ENCODE measurements at regions of chr10 and their contacts with region 1.

Region 1: DNA sequence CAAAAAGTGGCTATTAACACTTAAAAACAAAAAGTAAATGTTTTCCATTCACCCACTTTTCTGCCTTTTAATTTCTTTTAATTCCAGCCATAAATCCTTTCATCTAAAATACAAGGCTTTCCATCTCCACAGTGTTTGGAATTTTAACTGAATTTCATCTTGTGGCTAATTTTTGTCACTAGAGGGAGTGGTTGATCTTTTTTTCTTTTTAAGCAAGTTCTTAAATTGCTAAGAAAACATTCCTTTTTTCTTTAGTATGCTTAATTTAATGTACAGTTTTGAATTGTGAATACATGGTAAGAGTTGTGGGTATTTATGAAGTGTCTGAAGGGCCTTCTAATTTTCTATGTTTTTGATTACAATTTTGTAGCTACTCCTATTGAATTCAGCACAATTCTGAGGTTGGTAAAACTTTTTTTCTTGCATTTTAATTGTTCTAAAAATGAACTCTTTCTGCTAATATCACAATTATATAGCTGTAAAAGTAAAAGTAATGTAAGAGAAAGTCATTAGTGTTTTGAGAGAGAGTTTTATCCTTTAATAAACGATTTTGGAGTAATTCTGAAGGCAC is 54.9 kb upstream of the ANK3 start:
- DNase-seq: no peak
- H3K4me3 ChIP-seq: no peak overlapping the region
- H3K27ac ChIP-seq: no peak overlapping the region
- H3K4me1 ChIP-seq: peaks cover 0 to 16% of the 10 kb centered on the region in 2 donors
- H3K27me3 ChIP-seq: no peaks in the 10 kb centered on the region
- CTCF ChIP-seq: peak; percentile 23 to 74 (median 56)
- POLR2A ChIP-seq: no peak

Region 2: DNA sequence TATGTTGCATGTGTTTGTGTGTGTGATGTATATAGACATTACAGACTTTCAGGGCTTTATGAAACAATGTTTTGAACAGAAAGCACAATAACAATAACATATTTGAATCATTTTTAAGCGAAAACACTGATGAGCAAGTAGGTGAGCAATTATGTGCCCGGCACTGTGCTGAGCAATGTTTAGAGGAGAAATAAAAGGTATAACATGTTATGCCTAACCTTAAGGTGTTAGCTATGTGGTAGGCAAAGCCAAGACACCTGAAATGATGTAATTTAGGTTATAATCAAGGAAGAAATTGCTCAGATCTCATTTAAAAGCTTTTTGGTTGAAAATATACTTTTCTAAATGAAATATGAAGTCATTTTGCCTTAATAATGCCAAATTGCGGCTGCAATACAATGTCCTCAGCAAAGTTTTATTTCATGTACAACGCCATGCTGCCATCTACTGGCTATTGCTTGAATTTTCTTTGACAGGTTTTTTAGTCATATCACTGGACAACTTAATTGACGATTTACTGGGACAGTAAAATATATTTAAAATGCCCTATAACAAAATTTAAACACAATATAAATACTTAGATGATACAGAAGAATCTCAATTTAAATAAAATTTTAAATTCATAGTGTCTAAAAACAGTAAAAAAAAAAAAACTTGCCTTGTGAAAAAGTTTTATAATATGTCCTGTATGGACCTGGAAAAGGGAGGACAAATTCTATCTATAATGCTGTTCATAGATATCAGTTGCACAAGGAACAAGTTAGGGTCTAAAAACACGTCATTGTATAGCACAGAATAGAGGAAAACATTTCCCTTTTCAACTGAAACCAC is 202.6 kb after region 1 on chr10:
- intact Hi-C with region 1: loop called (anchors 2 to 5 kb)
- DNase-seq: peak in 6 of 7 donors; percentile 23 to 66 (median 48)
- H3K4me3 ChIP-seq: no peak overlapping the region
- H3K27ac ChIP-seq: no peak overlapping the region
- H3K4me1 ChIP-seq: no peaks in the 10 kb centered on the region
- H3K27me3 ChIP-seq: no peaks in the 10 kb centered on the region
- CTCF ChIP-seq: peak; percentile 71 to 88 (median 78)
- POLR2A ChIP-seq: no peak

Measured in adrenal gland (tissue), 19 donors.